CD4-positive, alpha-beta memory T cell (primary cell): ENCODE measurements at regions of chr14 and their contacts with region 1.

Region 1: DNA sequence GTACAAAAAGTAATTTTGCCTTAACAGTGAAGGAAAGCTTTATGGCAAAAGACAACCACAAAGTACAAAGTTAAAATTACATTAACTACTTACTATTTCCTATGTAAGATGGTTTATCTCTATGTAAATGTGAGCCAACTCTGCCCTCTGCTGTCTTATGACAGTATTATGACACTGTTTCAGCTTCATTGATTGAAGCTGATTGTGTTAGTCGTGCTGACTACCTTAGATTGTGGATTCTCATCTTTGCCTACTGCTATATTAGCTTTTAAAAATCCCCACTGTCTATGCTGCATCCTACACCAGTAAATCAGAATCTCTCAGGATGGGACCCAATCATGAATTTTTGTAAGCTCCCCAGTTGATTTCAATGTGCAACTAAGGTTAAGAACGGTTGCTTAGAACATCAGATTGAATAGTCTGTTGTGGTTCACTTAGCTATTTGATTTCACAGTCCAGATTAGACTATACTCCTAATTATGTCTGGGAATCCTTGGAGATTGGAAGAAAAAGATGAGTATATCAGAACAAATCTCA is 12.2 kb upstream of the SPTB start:
- DNase-seq: peak; percentile 56 to 65 (median 62)
- H3K4me3 ChIP-seq: no peak overlapping the region
- H3K4me3 Mint-ChIP-seq: no peak overlapping the region
- H3K27ac ChIP-seq: no peak overlapping the region
- H3K27ac Mint-ChIP-seq: no peak overlapping the region
- H3K4me1 ChIP-seq: no peaks in the 10 kb centered on the region
- H3K4me1 Mint-ChIP-seq: peaks cover 0 to 3% (median under 1%) of the 10 kb centered on the region in 4 donors
- H3K27me3 ChIP-seq: peaks cover 3% of the 10 kb centered on the region
- H3K27me3 Mint-ChIP-seq: peaks cover 7 to 8% of the 10 kb centered on the region in 2 donors

Region 2: GRCh38 chr14:64540208-64541157 is 351.4 kb before region 1 on chr14 and contains the start of gene HSPA2:
- CTCF ChIA-PET with region 1: interaction called, 8 read pairs
- POLR2A ChIA-PET with region 1: no interaction called
- intact Hi-C with region 1: loop called (anchors 5 kb)
- DNase-seq: peak; percentile 92 to 94 (median 94)
- H3K4me3 ChIP-seq: peak within 1 kb of the TSS; percentile 65 to 86
- H3K4me3 Mint-ChIP-seq: peak within 1 kb of the TSS; percentile 92 to 99 (median 96)
- H3K27ac ChIP-seq: peak within 1 kb of the TSS; percentile 43
- H3K27ac Mint-ChIP-seq: peak within 1 kb of the TSS; percentile 86 to 98 (median 90)
- H3K4me1 ChIP-seq: peaks cover 24% of the 10 kb centered on the region
- H3K4me1 Mint-ChIP-seq: peaks cover 12 to 39% (median 29%) of the 10 kb centered on the region in 4 donors
- H3K27me3 ChIP-seq: no peaks in the 10 kb centered on the region
- H3K27me3 Mint-ChIP-seq: peaks cover 0 to 3% of the 10 kb centered on the region in 2 donors
- total RNA-seq, gene HSPA2: 1.3 to 1.5 TPM

Region 3: DNA sequence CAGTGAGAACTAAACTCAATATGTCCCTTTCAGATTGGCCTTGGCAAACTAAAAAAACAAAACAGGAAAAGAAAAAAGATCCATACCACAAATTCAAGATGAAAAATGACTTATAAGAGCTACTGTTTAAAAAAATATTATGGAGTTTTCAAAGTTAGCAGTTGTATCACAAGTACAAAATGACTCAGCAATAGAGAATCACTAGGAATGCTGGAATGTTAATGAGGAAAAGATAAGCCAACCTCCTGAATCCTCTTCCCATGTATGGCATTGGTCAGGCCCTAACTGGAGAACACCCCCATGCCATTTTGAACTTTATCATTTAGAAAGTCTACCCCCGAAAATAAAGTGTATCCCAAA is 279.9 kb before region 1 on chr14:
- CTCF ChIA-PET with region 1: no interaction called
- POLR2A ChIA-PET with region 1: no interaction called
- intact Hi-C with region 1: no loop called
- DNase-seq: no peak
- H3K4me3 ChIP-seq: no peak overlapping the region
- H3K4me3 Mint-ChIP-seq: no peak overlapping the region
- H3K27ac ChIP-seq: no peak overlapping the region
- H3K27ac Mint-ChIP-seq: no peak overlapping the region
- H3K4me1 ChIP-seq: no peaks in the 10 kb centered on the region
- H3K4me1 Mint-ChIP-seq: no peaks in the 10 kb centered on the region
- H3K27me3 ChIP-seq: no peaks in the 10 kb centered on the region
- H3K27me3 Mint-ChIP-seq: peaks cover 2% of the 10 kb centered on the region in 2 donors

Region 4: DNA sequence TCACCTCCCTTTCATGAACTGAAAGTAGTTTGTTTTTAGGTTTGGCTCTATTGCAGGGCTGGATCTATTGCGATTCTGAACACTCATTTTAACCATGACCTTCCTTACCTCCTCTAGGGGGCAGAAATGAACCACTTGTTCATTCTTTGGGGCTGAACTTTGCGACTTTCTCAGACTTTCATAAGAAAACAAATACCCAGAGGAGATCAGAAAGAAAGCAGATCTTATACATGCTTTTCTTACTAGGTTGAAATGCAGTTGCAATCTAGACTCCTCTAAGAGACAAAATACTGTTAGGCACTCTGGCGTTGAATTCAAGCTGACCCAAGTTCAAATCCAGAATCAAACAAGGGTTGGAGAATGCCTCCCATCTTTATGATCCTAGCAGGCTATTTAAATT is 220.3 kb before region 1 on chr14:
- CTCF ChIA-PET with region 1: interaction called, 131 read pairs
- POLR2A ChIA-PET with region 1: interaction called, 9 read pairs
- intact Hi-C with region 1: loop called (anchors 5 kb)
- DNase-seq: peak; percentile 44 to 77 (median 71)
- H3K4me3 ChIP-seq: no peak overlapping the region
- H3K4me3 Mint-ChIP-seq: no peak overlapping the region
- H3K27ac ChIP-seq: no peak overlapping the region
- H3K27ac Mint-ChIP-seq: peak overlapping the region in 6 of 7 donors; percentile 11 to 79 (median 64)
- H3K4me1 ChIP-seq: peaks cover 37% of the 10 kb centered on the region
- H3K4me1 Mint-ChIP-seq: peaks cover 30 to 38% (median 33%) of the 10 kb centered on the region in 4 donors
- H3K27me3 ChIP-seq: no peaks in the 10 kb centered on the region
- H3K27me3 Mint-ChIP-seq: no peaks in the 10 kb centered on the region

Region 5: DNA sequence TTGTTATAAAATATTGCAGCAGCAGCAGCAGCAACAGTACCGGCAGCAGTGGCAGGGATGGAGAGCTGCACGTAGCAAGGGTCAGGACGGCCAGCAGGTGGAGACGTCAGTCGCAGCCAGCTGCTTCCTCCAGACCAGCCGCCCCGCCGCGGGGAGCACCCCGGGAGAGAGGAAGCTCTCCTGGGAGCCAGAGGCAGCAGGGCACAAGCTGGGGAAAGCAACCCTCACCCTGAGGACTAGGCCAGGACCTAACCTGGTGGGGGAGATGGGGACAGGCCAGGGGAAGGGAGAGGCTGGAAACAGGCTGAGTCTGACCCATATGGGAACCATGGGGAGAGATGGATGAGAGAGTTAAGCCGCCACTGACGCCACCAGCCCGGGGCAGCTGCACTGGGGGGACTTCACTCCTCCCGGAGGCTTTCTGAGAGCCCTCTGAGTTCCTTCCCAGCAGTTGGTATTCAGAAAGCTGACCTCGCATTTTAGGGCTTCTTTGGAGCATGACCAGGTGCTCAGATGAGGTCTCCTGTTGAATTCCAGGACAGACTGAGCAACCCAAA is 68.5 kb before region 1 on chr14:
- CTCF ChIA-PET with region 1: interaction called, 149 read pairs
- POLR2A ChIA-PET with region 1: interaction called, 8 read pairs
- intact Hi-C with region 1: loop called (anchors 5 kb)
- DNase-seq: peak; percentile 51 to 58 (median 55)
- H3K4me3 ChIP-seq: no peak overlapping the region
- H3K4me3 Mint-ChIP-seq: peak overlapping the region in 4 of 8 donors; percentile 35 to 46 (median 42)
- H3K27ac ChIP-seq: no peak overlapping the region
- H3K27ac Mint-ChIP-seq: peak overlapping the region in 2 of 7 donors; percentile 36 to 53
- H3K4me1 ChIP-seq: peaks cover 8% of the 10 kb centered on the region
- H3K4me1 Mint-ChIP-seq: peaks cover 2 to 6% (median 5%) of the 10 kb centered on the region in 4 donors
- H3K27me3 ChIP-seq: no peaks in the 10 kb centered on the region
- H3K27me3 Mint-ChIP-seq: peaks cover 3 to 19% of the 10 kb centered on the region in 2 donors

Region 6: GRCh38 chr14:64880221-64881121 is 11.4 kb before region 1 on chr14:
- CTCF ChIA-PET with region 1: interaction called, 87 read pairs
- POLR2A ChIA-PET with region 1: interaction called, 4 read pairs
- intact Hi-C with region 1: no loop called
- DNase-seq: peak; percentile 44 to 59 (median 47)
- H3K4me3 ChIP-seq: peak overlapping the region in 1 of 2 donors; percentile 57
- H3K4me3 Mint-ChIP-seq: peak overlapping the region; percentile 84 to 94 (median 88)
- H3K27ac ChIP-seq: no peak overlapping the region
- H3K27ac Mint-ChIP-seq: peak overlapping the region in 2 of 7 donors; percentile 15 to 66
- H3K4me1 ChIP-seq: peaks cover 11% of the 10 kb centered on the region
- H3K4me1 Mint-ChIP-seq: peaks cover 0 to 10% (median 9%) of the 10 kb centered on the region in 4 donors
- H3K27me3 ChIP-seq: peaks cover 16% of the 10 kb centered on the region
- H3K27me3 Mint-ChIP-seq: peaks cover 17 to 32% of the 10 kb centered on the region in 2 donors

Region 7: DNA sequence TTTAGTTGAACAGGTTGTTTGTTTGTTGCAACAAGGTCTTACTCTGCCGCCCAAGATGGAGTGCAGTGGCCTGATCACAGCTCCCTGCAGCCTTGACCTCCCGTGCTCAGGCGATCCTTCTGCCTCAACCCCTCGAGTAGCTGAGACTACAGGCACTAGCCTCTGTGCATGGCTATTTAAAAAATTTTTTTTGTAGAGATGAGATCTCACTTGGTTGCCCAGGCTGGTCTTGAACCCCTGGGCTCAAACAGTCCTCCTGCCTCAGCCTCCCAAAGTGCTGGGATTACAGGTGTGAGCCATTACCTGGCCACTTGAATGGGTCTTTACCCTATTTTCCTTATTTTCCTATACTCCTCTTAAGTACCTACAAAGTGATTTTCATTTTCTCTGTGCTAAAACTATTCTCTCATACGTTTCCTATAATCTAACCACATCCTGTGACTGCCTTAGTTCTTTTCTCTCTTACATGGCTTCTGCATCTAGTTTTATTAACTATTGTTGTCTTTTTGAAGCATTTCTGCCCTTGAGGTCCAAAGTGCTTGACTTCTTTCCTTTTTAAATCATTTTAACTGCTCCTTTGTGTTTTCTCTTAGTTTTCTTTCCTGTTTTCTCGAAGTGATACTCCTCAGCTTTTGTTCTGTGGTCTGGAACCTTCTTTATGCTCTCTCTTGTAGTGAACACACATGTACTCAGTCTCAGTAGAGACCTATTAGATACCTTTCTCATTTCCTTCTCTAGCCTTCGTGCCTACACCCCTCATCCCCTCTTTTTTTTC is 36.5 kb after region 1 on chr14:
- CTCF ChIA-PET with region 1: interaction called, 23 read pairs
- POLR2A ChIA-PET with region 1: no interaction called
- intact Hi-C with region 1: no loop called
- DNase-seq: peak in 4 of 5 donors; percentile 42 to 63 (median 55)
- H3K4me3 ChIP-seq: peak overlapping the region in 1 of 2 donors; percentile 30
- H3K4me3 Mint-ChIP-seq: no peak overlapping the region
- H3K27ac ChIP-seq: peak overlapping the region; percentile 56
- H3K27ac Mint-ChIP-seq: no peak overlapping the region
- H3K4me1 ChIP-seq: peaks cover 86% of the 10 kb centered on the region
- H3K4me1 Mint-ChIP-seq: peaks cover 21 to 38% (median 30%) of the 10 kb centered on the region in 4 donors
- H3K27me3 ChIP-seq: no peaks in the 10 kb centered on the region
- H3K27me3 Mint-ChIP-seq: no peaks in the 10 kb centered on the region